Activated naive CD4-positive, alpha-beta T cell treated with anti-CD3 and anti-CD28 coated beads for 36 hours (primary cell): ENCODE measurements at regions of chr7 and their contacts with region 1.

Region 1: GRCh38 chr7:23696916-23697441 is 13.0 kb upstream of the STK31 start:
- DNase-seq: peak; percentile 67
- H3K4me3 Mint-ChIP-seq: no peak overlapping the region
- H3K27ac Mint-ChIP-seq: no peak overlapping the region
- H3K4me1 Mint-ChIP-seq: peaks cover 1% of the 10 kb centered on the region
- H3K27me3 Mint-ChIP-seq: no peaks in the 10 kb centered on the region

Region 2: GRCh38 chr7:23679898-23680413 is 17.0 kb before region 1 on chr7 and contains the start of gene FAM221A:
- CTCF ChIA-PET with region 1: interaction called, 31 read pairs
- intact Hi-C with region 1: no loop called
- DNase-seq: peak; percentile 86
- H3K4me3 Mint-ChIP-seq: peak within 1 kb of the TSS; percentile 80
- H3K27ac Mint-ChIP-seq: peak within 1 kb of the TSS; percentile 66
- H3K4me1 Mint-ChIP-seq: peaks cover 11% of the 10 kb centered on the region
- H3K27me3 Mint-ChIP-seq: peaks cover 5% of the 10 kb centered on the region
- total RNA-seq, gene FAM221A: 8.7 to 10.0 TPM

Region 3: DNA sequence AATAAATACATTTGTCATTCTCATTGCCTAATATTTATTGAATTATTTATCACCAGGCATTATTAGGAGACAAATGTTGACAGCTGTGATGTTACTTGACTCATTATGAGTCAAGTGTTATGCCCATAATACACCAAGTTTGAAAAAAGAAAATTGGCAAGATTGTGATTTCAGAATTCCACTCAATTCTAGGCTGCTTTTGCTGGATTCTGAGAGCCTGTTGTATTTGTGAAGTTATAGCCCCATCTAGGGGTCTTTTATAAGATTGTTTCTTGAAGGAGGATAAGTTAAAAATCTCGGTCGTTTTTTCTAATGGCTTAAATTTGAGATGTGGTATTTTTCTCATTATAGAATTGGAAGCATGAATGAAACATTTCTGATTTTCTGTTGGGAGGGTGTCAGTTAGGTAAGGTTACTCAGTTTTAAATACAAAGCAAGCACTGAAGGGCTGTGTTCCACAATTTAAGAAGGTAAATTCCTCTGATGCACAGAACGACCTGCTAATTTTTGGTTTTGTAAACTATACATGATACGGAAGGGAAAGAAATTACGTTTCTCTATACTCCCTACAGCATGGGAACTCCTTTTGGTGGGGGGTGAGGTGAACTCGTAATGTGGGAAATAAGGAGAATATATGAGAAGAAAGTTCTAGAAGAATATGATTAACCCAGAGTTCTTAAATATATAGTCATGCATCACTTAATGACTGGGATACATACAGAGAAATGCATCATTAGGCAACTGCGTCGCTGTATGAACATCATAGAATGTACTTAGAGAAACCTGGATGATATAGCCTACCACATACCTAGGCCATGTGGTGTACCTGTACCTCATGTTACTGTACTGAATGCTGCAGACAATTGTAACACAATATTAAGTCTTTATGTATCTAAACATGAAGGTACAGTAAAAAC is 15.6 kb after region 1 on chr7:
- CTCF ChIA-PET with region 1: interaction called, 12 read pairs
- intact Hi-C with region 1: no loop called
- DNase-seq: no peak
- H3K4me3 Mint-ChIP-seq: no peak overlapping the region
- H3K27ac Mint-ChIP-seq: no peak overlapping the region
- H3K4me1 Mint-ChIP-seq: no peaks in the 10 kb centered on the region
- H3K27me3 Mint-ChIP-seq: peaks cover 2% of the 10 kb centered on the region